Mammary epithelial cell (primary cell): ENCODE measurements at regions of chr1 and their contacts with region 1.

Region 1: DNA sequence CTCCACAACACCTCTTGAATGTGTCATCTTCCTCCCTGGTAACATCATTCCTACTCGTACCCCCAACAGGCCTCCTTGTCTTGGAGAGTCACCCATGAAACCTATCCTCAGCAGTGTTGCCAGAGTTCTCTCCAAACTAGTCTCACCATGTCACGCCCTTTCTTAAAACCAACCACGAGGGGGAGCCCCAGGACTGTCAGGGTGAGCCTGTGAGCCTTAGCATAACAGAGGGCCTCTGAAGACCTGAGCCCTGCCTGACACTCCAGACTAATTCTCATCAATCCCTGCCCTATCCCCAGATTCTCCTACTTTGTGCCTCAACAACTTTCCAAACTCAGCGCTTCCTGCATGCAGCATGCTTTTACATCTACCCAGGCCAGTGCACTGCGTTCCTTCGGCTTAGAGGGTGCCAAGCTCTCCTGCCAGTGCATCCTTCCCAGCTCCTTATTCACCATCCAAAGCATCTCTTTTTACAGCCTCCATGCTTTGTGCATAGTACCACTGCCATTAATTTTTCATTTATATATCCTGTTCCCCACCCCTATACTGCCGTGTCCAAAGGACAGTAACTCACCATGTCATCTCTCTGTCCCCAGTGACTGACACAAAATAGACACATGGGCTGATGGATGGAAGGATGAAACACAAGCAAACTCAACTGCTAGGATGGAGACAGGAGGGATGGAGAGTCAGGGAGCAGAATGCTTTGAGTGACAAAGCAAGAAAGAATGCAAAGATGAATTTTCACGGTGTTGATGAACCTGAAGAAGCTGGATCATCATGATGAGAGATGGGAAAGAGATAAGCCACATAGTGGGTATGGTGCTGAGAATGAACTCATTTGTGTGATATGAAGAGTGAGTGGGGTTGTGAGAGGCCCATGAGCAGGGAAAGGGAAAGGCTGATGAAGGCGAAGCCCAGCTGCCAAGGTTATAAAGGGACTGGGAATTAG is 34.0 kb downstream of the ZNF697 start:
- DNase-seq: peak; percentile 76
- H3K4me3 ChIP-seq: no peak overlapping the region
- H3K27ac ChIP-seq: no peak overlapping the region
- H3K4me1 ChIP-seq: no peaks in the 10 kb centered on the region
- H3K27me3 ChIP-seq: no peaks in the 10 kb centered on the region
- CTCF ChIP-seq: peak; percentile 59 to 85

Region 2: GRCh38 chr1:119475866-119476439 is 138.1 kb before region 1 on chr1:
- CTCF ChIA-PET with region 1: no interaction called
- dilution Hi-C with region 1: no loop called
- in situ Hi-C with region 1: no loop called
- intact Hi-C with region 1: loop called (anchors 2 kb)
- DNase-seq: peak; percentile 64
- H3K4me3 ChIP-seq: no peak overlapping the region
- H3K27ac ChIP-seq: no peak overlapping the region
- H3K4me1 ChIP-seq: no peaks in the 10 kb centered on the region
- H3K27me3 ChIP-seq: no peaks in the 10 kb centered on the region
- CTCF ChIP-seq: peak; percentile 92 to 95

Region 3: GRCh38 chr1:119647734-119648619 is 33.9 kb after region 1 on chr1 and contains the start of gene ZNF697:
- CTCF ChIA-PET with region 1: interaction called, 3 read pairs
- dilution Hi-C with region 1: no loop called
- in situ Hi-C with region 1: no loop called
- intact Hi-C with region 1: loop called (anchors 5 kb)
- DNase-seq: peak; percentile 97
- H3K4me3 ChIP-seq: peak within 1 kb of the TSS; percentile 64 to 83 (median 71)
- H3K27ac ChIP-seq: peak within 1 kb of the TSS; percentile 67
- H3K4me1 ChIP-seq: peaks cover 47% of the 10 kb centered on the region
- H3K27me3 ChIP-seq: no peaks in the 10 kb centered on the region
- CTCF ChIP-seq: peak; percentile 4 to 11
- total RNA-seq, gene ZNF697: 7.3 to 9.4 TPM

Region 4: GRCh38 chr1:119732465-119733168 is 118.6 kb after region 1 on chr1:
- CTCF ChIA-PET with region 1: interaction called, 3 read pairs
- dilution Hi-C with region 1: no loop called
- in situ Hi-C with region 1: no loop called
- intact Hi-C with region 1: loop called (anchors 5 kb)
- DNase-seq: peak; percentile 41
- H3K4me3 ChIP-seq: no peak overlapping the region
- H3K27ac ChIP-seq: no peak overlapping the region
- H3K4me1 ChIP-seq: peaks cover 31% of the 10 kb centered on the region
- H3K27me3 ChIP-seq: no peaks in the 10 kb centered on the region
- CTCF ChIP-seq: no peak

Region 5: GRCh38 chr1:119870917-119871596 is 257.0 kb after region 1 on chr1:
- CTCF ChIA-PET with region 1: no interaction called
- dilution Hi-C with region 1: no loop called
- in situ Hi-C with region 1: no loop called
- intact Hi-C with region 1: loop called (anchors 5 kb)
- DNase-seq: peak; percentile 57
- H3K4me3 ChIP-seq: no peak overlapping the region
- H3K27ac ChIP-seq: no peak overlapping the region
- H3K4me1 ChIP-seq: peaks cover 25% of the 10 kb centered on the region
- H3K27me3 ChIP-seq: no peaks in the 10 kb centered on the region
- CTCF ChIP-seq: peak; percentile 98 to 99